CD4-positive, alpha-beta memory T cell (primary cell): ENCODE measurements at regions of chr17 and their contacts with region 1.

Region 1: GRCh38 chr17:50094753-50095619 is at the start of gene PDK2:
- DNase-seq: peak; percentile 96 to 98 (median 98)
- H3K4me3 ChIP-seq: peak within 1 kb of the TSS; percentile 81 to 97
- H3K4me3 Mint-ChIP-seq: peak within 1 kb of the TSS; percentile 95 to 99 (median 98)
- H3K27ac ChIP-seq: peak within 1 kb of the TSS; percentile 80
- H3K27ac Mint-ChIP-seq: peak within 1 kb of the TSS; percentile 92 to 99 (median 97)
- H3K4me1 ChIP-seq: peaks cover 25% of the 10 kb centered on the region
- H3K4me1 Mint-ChIP-seq: peaks cover 14 to 36% (median 24%) of the 10 kb centered on the region in 4 donors
- H3K27me3 ChIP-seq: no peaks in the 10 kb centered on the region
- H3K27me3 Mint-ChIP-seq: peaks cover 0 to 2% of the 10 kb centered on the region in 2 donors
- total RNA-seq, gene PDK2: 39.1 to 40.6 TPM

Region 2: DNA sequence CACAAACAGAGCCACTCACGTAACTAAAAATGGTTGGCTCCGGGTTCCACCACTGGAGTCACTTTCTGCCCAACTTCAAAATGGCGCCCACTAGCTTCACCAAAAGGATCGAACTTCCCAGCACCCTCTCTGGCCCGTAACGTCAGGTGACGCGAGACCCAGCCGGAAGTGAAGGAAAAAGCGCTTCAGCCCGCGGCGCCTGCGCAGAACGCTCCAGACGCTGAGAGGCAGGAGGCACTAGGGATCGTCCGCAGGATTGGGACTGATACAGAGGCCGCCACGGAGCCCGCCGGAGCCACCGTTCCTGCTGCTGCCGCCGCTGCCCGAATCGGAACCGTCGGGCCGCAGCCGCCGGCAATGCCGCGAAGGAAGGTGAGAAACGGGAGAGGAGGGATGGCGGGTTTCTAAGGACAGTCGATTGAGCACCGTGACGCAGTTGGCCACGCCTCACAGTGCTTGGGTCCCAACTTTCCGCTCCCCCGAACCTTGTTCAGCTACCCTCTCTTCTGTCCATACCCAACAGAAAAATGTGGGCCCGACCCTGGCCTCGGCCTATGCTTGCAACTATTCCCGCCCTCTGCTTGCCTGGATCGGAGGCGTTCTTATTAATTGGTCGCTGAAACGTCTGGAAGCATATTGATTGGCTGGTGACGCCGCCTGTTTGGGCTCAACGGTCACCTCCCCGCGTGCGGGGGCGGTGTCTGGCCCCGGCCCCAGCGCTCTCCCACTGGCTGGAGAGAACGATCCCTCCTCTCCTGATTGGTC is 306.3 kb before region 1 on chr17 and contains the start of gene KAT7:
- CTCF ChIA-PET with region 1: no interaction called
- POLR2A ChIA-PET with region 1: no interaction called
- intact Hi-C with region 1: loop called (anchors 10 kb)
- DNase-seq: peak; percentile 98 to 99 (median 99)
- H3K4me3 ChIP-seq: peak within 1 kb of the TSS; percentile 92 to 96
- H3K4me3 Mint-ChIP-seq: peak within 1 kb of the TSS; percentile 93 to 99 (median 96)
- H3K27ac ChIP-seq: peak within 1 kb of the TSS; percentile 99
- H3K27ac Mint-ChIP-seq: peak within 1 kb of the TSS; percentile 91 to 100 (median 98)
- H3K4me1 ChIP-seq: peaks cover 54% of the 10 kb centered on the region
- H3K4me1 Mint-ChIP-seq: peaks cover 38 to 65% (median 53%) of the 10 kb centered on the region in 4 donors
- H3K27me3 ChIP-seq: no peaks in the 10 kb centered on the region
- H3K27me3 Mint-ChIP-seq: no peaks in the 10 kb centered on the region
- total RNA-seq, gene KAT7: 115 to 120 TPM

Region 3: GRCh38 chr17:49809056-49809455 is 285.9 kb before region 1 on chr17:
- CTCF ChIA-PET with region 1: no interaction called
- POLR2A ChIA-PET with region 1: no interaction called
- intact Hi-C with region 1: no loop called
- DNase-seq: no peak
- H3K4me3 ChIP-seq: no peak overlapping the region
- H3K4me3 Mint-ChIP-seq: no peak overlapping the region
- H3K27ac ChIP-seq: no peak overlapping the region
- H3K27ac Mint-ChIP-seq: peak overlapping the region in 2 of 7 donors; percentile 55 to 67
- H3K4me1 ChIP-seq: no peaks in the 10 kb centered on the region
- H3K4me1 Mint-ChIP-seq: peaks cover 23 to 55% (median 26%) of the 10 kb centered on the region in 4 donors
- H3K27me3 ChIP-seq: no peaks in the 10 kb centered on the region
- H3K27me3 Mint-ChIP-seq: no peaks in the 10 kb centered on the region

Region 4: GRCh38 chr17:50026901-50027630 is 67.9 kb before region 1 on chr17:
- CTCF ChIA-PET with region 1: interaction called, 101 read pairs
- POLR2A ChIA-PET with region 1: interaction called, 6 read pairs
- intact Hi-C with region 1: loop called (anchors 2 kb)
- DNase-seq: peak; percentile 69 to 75 (median 71)
- H3K4me3 ChIP-seq: no peak overlapping the region
- H3K4me3 Mint-ChIP-seq: peak overlapping the region in 3 of 8 donors; percentile 17 to 56 (median 39)
- H3K27ac ChIP-seq: no peak overlapping the region
- H3K27ac Mint-ChIP-seq: no peak overlapping the region
- H3K4me1 ChIP-seq: peaks cover 8% of the 10 kb centered on the region
- H3K4me1 Mint-ChIP-seq: peaks cover 2 to 21% (median 9%) of the 10 kb centered on the region in 4 donors
- H3K27me3 ChIP-seq: no peaks in the 10 kb centered on the region
- H3K27me3 Mint-ChIP-seq: peaks cover 19 to 22% of the 10 kb centered on the region in 2 donors

Region 5: GRCh38 chr17:50106393-50107131 is 11.6 kb after region 1 on chr17:
- CTCF ChIA-PET with region 1: interaction called, 15 read pairs
- POLR2A ChIA-PET with region 1: interaction called, 4 read pairs
- intact Hi-C with region 1: no loop called
- DNase-seq: no peak
- H3K4me3 ChIP-seq: no peak overlapping the region
- H3K4me3 Mint-ChIP-seq: no peak overlapping the region
- H3K27ac ChIP-seq: no peak overlapping the region
- H3K27ac Mint-ChIP-seq: no peak overlapping the region
- H3K4me1 ChIP-seq: no peaks in the 10 kb centered on the region
- H3K4me1 Mint-ChIP-seq: no peaks in the 10 kb centered on the region
- H3K27me3 ChIP-seq: no peaks in the 10 kb centered on the region
- H3K27me3 Mint-ChIP-seq: no peaks in the 10 kb centered on the region

Region 6: DNA sequence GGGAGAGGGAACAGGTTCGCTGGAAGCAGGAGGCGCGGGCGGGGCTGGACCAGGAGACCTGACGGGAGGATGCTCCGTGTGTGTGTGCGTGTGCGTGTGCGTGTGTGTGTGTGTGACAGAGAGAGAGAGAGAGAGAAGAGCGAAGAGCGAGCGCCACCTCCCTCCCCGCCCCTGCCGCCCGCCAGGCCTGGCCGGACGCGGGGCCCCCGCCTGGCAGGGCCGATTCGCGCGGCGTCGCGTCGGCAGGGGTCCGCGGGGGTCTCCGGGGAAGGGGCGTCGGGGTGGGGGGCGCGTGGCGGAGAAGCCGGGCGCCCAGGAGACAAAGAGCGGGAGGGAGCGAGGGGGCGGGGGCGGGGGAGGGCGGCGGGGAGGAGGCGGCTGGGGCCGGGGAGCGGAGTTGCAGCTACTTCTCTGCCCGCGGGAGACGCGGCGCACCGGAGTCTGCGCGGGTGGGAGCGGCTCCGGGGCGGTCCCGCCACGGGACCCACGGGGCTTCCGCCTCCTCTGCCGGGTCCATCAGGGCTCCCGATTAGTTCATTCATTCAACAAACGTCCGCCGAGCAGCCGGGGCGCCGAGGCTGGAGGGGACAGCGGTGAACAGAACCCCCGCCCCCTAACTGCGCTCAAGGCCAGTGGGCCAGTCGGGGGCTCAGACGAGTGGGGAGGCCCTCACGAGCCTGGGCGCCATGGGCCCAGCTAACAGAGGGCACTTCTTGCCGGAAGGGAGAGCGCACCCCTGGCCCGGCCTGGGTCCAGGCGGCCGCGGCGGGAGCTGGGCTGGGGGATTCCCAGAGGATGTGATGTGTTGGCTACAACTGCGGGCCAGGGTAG is 35.0 kb after region 1 on chr17 and contains the start of gene SAMD14:
- CTCF ChIA-PET with region 1: interaction called, 7 read pairs
- POLR2A ChIA-PET with region 1: interaction called, 11 read pairs
- intact Hi-C with region 1: loop called (anchors 1 kb)
- DNase-seq: peak; percentile 63 to 80 (median 68)
- H3K4me3 ChIP-seq: peak within 1 kb of the TSS in 1 of 2 donors; percentile 49
- H3K4me3 Mint-ChIP-seq: peak within 1 kb of the TSS; percentile 76 to 95 (median 84)
- H3K27ac ChIP-seq: no peak within 1 kb of the TSS
- H3K27ac Mint-ChIP-seq: peak within 1 kb of the TSS; percentile 72 to 99 (median 92)
- H3K4me1 ChIP-seq: peaks cover 26% of the 10 kb centered on the region
- H3K4me1 Mint-ChIP-seq: peaks cover 11 to 42% (median 26%) of the 10 kb centered on the region in 4 donors
- H3K27me3 ChIP-seq: peaks cover 6% of the 10 kb centered on the region
- H3K27me3 Mint-ChIP-seq: peaks cover 3 to 7% of the 10 kb centered on the region in 2 donors
- total RNA-seq, gene SAMD14: 1.2 to 1.3 TPM

Region 7: DNA sequence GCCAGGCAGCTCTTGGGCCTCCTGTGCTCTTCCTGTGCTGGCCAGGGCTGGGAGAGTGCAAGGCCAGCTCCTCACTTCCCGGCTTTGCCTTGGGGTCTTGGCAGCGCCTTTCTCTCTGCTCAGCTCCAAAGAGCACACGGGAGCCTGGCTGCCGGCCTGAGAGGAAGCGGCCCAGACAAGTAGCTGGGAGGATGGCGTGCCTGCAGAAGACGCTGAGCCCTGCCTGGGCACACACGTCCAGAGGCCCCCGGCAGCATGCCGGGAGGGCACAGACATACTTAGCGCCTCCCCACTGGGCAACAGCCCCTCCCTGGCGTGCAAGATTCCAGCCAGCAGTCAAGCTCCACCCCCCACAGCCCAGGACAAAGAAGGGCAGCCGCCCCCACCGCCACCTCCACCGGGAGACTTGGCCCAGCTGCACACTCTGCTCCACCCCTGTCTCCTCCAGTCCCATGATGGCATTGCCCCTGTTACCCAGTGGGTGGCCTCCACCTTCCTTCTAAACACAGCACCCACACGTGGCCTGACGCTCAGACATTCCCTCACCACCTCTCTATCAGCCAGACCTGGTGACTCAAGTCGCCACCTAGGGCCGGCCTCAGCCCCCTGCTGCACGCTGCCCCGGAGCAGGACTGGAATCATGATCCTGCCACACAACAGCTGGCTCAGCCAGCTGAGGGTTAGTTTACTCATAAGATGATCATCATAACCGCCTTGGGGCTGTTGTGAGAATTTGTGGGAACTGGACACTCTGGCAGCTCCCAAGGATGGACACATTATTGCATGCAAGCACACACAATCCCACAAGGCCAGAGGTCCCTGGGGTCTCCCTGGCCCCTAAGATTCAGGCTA is 83.2 kb after region 1 on chr17:
- CTCF ChIA-PET with region 1: interaction called, 17 read pairs
- POLR2A ChIA-PET with region 1: no interaction called
- intact Hi-C with region 1: loop called (anchors 1 kb)
- DNase-seq: peak; percentile 27 to 73 (median 37)
- H3K4me3 ChIP-seq: no peak overlapping the region
- H3K4me3 Mint-ChIP-seq: peak overlapping the region in 7 of 8 donors; percentile 43 to 79 (median 61)
- H3K27ac ChIP-seq: no peak overlapping the region
- H3K27ac Mint-ChIP-seq: peak overlapping the region in 4 of 7 donors; percentile 17 to 80 (median 30)
- H3K4me1 ChIP-seq: peaks cover 4% of the 10 kb centered on the region
- H3K4me1 Mint-ChIP-seq: peaks cover 6 to 20% (median 9%) of the 10 kb centered on the region in 4 donors
- H3K27me3 ChIP-seq: no peaks in the 10 kb centered on the region
- H3K27me3 Mint-ChIP-seq: no peaks in the 10 kb centered on the region

Region 8: GRCh38 chr17:50297407-50297865 is 202.4 kb after region 1 on chr17:
- CTCF ChIA-PET with region 1: interaction called, 20 read pairs
- POLR2A ChIA-PET with region 1: no interaction called
- intact Hi-C with region 1: no loop called
- DNase-seq: peak; percentile 73 to 81 (median 75)
- H3K4me3 ChIP-seq: no peak overlapping the region
- H3K4me3 Mint-ChIP-seq: no peak overlapping the region
- H3K27ac ChIP-seq: no peak overlapping the region
- H3K27ac Mint-ChIP-seq: peak overlapping the region in 1 of 7 donors; percentile 47
- H3K4me1 ChIP-seq: no peaks in the 10 kb centered on the region
- H3K4me1 Mint-ChIP-seq: no peaks in the 10 kb centered on the region
- H3K27me3 ChIP-seq: no peaks in the 10 kb centered on the region
- H3K27me3 Mint-ChIP-seq: peaks cover 0 to 4% of the 10 kb centered on the region in 2 donors